H1 (cell line): ENCODE measurements at regions of chr15 and their contacts with region 1.

Region 1: GRCh38 chr15:61834076-61834697 is 226.1 kb downstream of the VPS13C start:
- DNase-seq: peak; percentile 56 to 96
- H3K4me3 ChIP-seq: no peak overlapping the region
- H3K27ac ChIP-seq: no peak overlapping the region
- H3K4me1 ChIP-seq: peaks cover 0 to 9% (median under 1%) of the 10 kb centered on the region in 4 experiments; a peak in 5 of 7 replicates
- H3K27me3 ChIP-seq: no peaks in the 10 kb centered on the region
- CTCF ChIP-seq: peak; percentile 86 to 94 (median 88)
- EP300 ChIP-seq: no peak
- POLR2A ChIP-seq: no peak
- RAD21 ChIP-seq: peak; percentile 92 to 95

Region 2: GRCh38 chr15:61169904-61170695 is 664.1 kb before region 1 on chr15:
- CTCF ChIA-PET with region 1: interaction called, 56 read pairs
- POLR2A ChIA-PET with region 1: no interaction called
- DNase-seq: no peak
- H3K4me3 ChIP-seq: no peak overlapping the region
- H3K27ac ChIP-seq: no peak overlapping the region
- H3K4me1 ChIP-seq: peaks cover 10 to 34% (median 29%) of the 10 kb centered on the region in 4 experiments
- H3K27me3 ChIP-seq: no peaks in the 10 kb centered on the region
- CTCF ChIP-seq: no peak
- EP300 ChIP-seq: no peak
- POLR2A ChIP-seq: no peak
- RAD21 ChIP-seq: no peak

Region 3: DNA sequence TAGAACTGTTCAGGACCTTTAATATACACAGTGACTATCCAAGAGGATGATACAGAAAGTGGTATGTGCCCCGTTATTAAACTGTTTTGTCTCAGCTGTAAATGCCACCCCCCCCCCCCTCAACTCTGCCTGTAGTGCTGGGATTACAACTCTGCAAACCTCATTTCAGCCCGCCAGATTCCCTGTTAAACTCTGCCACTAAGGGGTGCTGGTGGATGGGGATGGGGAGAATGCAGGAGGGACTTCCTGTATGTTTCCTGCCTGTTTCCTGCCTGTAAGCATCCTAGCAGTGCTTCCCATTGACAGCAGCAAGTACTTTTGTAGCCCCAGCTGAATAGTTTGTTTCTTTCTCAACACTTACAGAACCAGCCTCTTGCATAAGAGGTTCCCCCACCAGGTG is 303.4 kb before region 1 on chr15:
- CTCF ChIA-PET with region 1: interaction called, 20 read pairs
- POLR2A ChIA-PET with region 1: no interaction called
- DNase-seq: peak in 1 of 2 experiments; percentile 48
- H3K4me3 ChIP-seq: no peak overlapping the region
- H3K27ac ChIP-seq: no peak overlapping the region
- H3K4me1 ChIP-seq: peaks cover 6 to 9% (median 6%) of the 10 kb centered on the region in 4 experiments; a peak in 6 of 7 replicates
- H3K27me3 ChIP-seq: no peaks in the 10 kb centered on the region
- CTCF ChIP-seq: peak; percentile 49 to 69 (median 68)
- EP300 ChIP-seq: no peak
- POLR2A ChIP-seq: no peak
- RAD21 ChIP-seq: peak; percentile 76 to 85

Region 4: DNA sequence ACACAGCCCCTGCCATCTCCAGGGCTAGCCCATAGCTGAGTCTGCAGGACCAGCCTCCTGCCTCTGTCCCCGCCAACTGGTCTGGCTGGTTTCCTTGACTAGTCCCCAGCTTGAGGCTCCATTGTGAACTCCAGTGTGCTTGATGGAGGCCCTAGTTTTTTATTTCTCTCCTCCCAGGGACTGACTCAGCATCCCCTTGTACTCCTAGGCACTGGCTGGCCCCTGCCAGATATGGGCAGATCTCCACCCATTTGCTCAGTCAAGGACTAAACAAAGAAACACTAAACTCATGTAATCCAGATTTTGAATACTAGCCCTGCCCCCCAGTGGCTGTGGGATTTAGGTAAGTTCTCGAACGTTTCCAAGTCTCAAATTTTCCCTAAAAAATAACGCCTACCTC is 189.6 kb before region 1 on chr15:
- CTCF ChIA-PET with region 1: interaction called, 14 read pairs
- POLR2A ChIA-PET with region 1: no interaction called
- DNase-seq: no peak
- H3K4me3 ChIP-seq: no peak overlapping the region
- H3K27ac ChIP-seq: no peak overlapping the region
- H3K4me1 ChIP-seq: peaks cover 0 to 13% (median 5%) of the 10 kb centered on the region in 4 experiments; a peak in 5 of 7 replicates
- H3K27me3 ChIP-seq: peaks cover 0 to 7% (median 2%) of the 10 kb centered on the region in 4 experiments; a peak in 3 of 7 replicates
- CTCF ChIP-seq: no peak
- EP300 ChIP-seq: no peak
- POLR2A ChIP-seq: no peak
- RAD21 ChIP-seq: peak; percentile 15 to 31; a peak in 3 of 4 replicates

Region 5: DNA sequence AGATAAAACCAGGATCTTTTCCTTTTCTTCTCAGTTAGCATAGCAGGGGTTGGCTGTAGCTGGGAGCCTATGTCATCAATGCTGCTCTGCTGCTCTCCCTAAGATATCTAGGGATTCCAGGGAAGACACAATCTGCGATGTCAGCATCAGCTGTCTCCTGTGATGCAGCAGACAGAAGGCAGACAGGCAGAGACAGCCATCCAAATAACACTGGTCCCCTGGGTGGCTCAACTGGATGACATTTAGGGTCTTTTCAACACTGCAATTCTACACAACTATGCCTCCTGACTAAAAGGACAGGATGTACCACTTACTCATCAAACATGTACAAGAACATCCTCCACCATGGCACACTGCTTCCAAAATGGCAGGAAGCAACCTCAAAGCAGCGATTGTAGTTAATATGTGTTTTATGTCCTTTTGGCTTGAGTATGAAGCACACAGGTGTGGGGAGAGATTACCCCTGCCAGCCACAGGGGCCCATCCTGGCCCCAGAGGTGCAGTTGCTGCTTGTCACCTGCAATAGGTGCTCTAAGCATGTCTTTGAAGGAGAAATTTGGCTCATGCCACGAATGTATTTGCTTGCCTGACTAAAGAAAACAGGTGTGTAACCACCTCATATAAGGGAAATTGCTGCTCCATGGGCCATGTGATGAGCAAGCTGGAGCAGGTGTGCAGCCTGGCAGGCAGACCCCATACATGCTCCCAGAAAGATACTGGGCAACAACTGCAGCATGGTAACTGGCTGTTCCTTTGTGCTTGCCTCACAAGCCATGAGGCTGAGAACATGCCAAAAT is 131.8 kb before region 1 on chr15:
- CTCF ChIA-PET with region 1: interaction called, 36 read pairs
- POLR2A ChIA-PET with region 1: no interaction called
- DNase-seq: peak; percentile 25 to 48
- H3K4me3 ChIP-seq: no peak overlapping the region
- H3K27ac ChIP-seq: no peak overlapping the region
- H3K4me1 ChIP-seq: no peaks in the 10 kb centered on the region; a peak in 1 of 7 replicates
- H3K27me3 ChIP-seq: no peaks in the 10 kb centered on the region
- CTCF ChIP-seq: peak; percentile 61 to 80 (median 75)
- EP300 ChIP-seq: no peak
- POLR2A ChIP-seq: no peak
- RAD21 ChIP-seq: peak; percentile 78 to 81

Region 6: GRCh38 chr15:61746589-61746988 is 87.6 kb before region 1 on chr15:
- CTCF ChIA-PET with region 1: interaction called, 10 read pairs
- POLR2A ChIA-PET with region 1: no interaction called
- DNase-seq: no peak
- H3K4me3 ChIP-seq: no peak overlapping the region
- H3K27ac ChIP-seq: no peak overlapping the region
- H3K4me1 ChIP-seq: no peaks in the 10 kb centered on the region
- H3K27me3 ChIP-seq: no peaks in the 10 kb centered on the region
- CTCF ChIP-seq: no peak
- EP300 ChIP-seq: no peak
- POLR2A ChIP-seq: no peak
- RAD21 ChIP-seq: no peak